Colonic mucosa (tissue), 4 donors: ENCODE measurements at regions of chr2 and their contacts with region 1.

Region 1: GRCh38 chr2:100984892-100985379 is 17.2 kb upstream of the RPL31 start:
- DNase-seq: peak; percentile 73
- H3K4me3 ChIP-seq: no peak overlapping the region
- H3K27ac ChIP-seq: no peak overlapping the region
- H3K4me1 ChIP-seq: no peaks in the 10 kb centered on the region
- H3K27me3 ChIP-seq: no peaks in the 10 kb centered on the region
- CTCF ChIP-seq: peak; percentile 83

Region 2: GRCh38 chr2:100606726-100607343 is 378.1 kb before region 1 on chr2:
- intact Hi-C with region 1: loop called (anchors 5 kb)
- DNase-seq: peak; percentile 45
- H3K4me3 ChIP-seq: no peak overlapping the region
- H3K27ac ChIP-seq: no peak overlapping the region
- H3K4me1 ChIP-seq: no peaks in the 10 kb centered on the region
- H3K27me3 ChIP-seq: no peaks in the 10 kb centered on the region
- CTCF ChIP-seq: peak; percentile 69

Region 3: GRCh38 chr2:100733391-100734187 is 251.3 kb before region 1 on chr2:
- intact Hi-C with region 1: loop called (anchors 2 kb)
- DNase-seq: no peak
- H3K4me3 ChIP-seq: no peak overlapping the region
- H3K27ac ChIP-seq: no peak overlapping the region
- H3K4me1 ChIP-seq: no peaks in the 10 kb centered on the region
- H3K27me3 ChIP-seq: no peaks in the 10 kb centered on the region
- CTCF ChIP-seq: no peak